AG04450 (cell line): ENCODE measurements at regions of chr6 and their contacts with region 1.

Region 1: DNA sequence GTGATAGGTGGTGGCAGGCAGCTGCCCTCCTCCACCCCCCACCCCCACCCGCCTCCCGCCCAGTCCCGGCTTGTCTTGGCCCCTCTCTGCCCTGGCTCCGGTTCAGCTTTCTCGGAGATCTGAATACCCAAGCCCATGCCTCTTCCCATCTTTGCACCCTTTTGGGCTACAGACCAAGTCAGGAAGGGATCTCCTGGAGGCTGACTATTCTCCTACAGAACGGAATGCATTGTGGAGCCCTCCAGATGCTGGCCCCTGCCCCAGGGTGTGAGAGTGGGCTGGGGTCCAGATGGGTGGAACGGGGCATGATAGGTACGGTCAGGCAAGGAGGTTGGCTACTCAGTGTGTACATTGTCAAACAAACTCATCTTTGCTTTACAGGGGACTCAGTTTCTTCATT is 142.0 kb downstream of the CDC5L start:
- DNase-seq: no peak
- H3K4me3 ChIP-seq: no peak overlapping the region
- H3K27ac ChIP-seq: no peak overlapping the region
- H3K27me3 ChIP-seq: peaks cover 54% of the 10 kb centered on the region
- CTCF ChIP-seq: no peak

Region 2: GRCh38 chr6:44542401-44543116 is 13.1 kb after region 1 on chr6:
- CTCF ChIA-PET with region 1: no interaction called
- POLR2A ChIA-PET with region 1: no interaction called
- DNase-seq: no peak
- H3K4me3 ChIP-seq: no peak overlapping the region
- H3K27ac ChIP-seq: no peak overlapping the region
- H3K27me3 ChIP-seq: peaks cover 9% of the 10 kb centered on the region
- CTCF ChIP-seq: no peak

Region 3: GRCh38 chr6:45757443-45758130 is 1228.1 kb after region 1 on chr6:
- CTCF ChIA-PET with region 1: interaction called, 10 read pairs
- POLR2A ChIA-PET with region 1: no interaction called
- DNase-seq: no peak
- H3K4me3 ChIP-seq: no peak overlapping the region
- H3K27ac ChIP-seq: no peak overlapping the region
- H3K27me3 ChIP-seq: peaks cover 6% of the 10 kb centered on the region
- CTCF ChIP-seq: no peak